PC-3 (cell line): ENCODE measurements at regions of chr14 and their contacts with region 1.

Region 1: GRCh38 chr14:55957950-55958349 is 160.3 kb upstream of the PELI2 start:
- DNase-seq: no peak
- ATAC-seq: no peak
- H3K4me3 ChIP-seq: no peak overlapping the region
- H3K27ac ChIP-seq: no peak overlapping the region
- H3K4me1 ChIP-seq: no peaks in the 10 kb centered on the region
- H3K27me3 ChIP-seq: peaks cover 87% of the 10 kb centered on the region
- CTCF ChIP-seq: no peak

Region 2: DNA sequence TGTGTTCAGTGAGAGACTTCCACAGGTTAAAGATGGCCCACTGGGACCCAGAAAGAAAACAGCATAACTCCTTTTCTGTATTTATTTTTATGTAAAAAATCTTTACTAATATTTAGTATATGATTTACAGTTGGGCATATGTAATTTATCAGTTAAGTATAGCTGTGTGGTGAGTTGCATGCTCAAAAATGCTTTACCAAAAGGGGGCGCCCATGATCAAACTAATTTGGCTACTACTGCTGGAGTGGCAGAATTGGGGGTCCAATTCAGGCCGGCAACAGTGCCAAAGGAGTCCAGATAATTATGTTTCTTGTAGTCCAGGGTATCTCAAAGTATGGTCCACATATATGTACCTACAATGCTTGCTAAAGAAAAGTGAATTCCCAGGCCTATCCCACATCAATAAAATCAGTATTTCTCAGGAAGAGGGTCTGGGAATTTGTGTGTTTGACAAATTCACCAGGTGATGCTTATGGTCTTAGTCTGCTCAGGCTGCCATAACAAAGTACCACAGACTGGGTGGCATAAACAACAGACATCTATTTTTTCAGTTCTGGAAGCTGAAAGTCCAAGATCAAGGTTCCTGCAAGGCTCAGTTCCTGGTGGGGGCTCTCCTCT is 226.0 kb before region 1 on chr14:
- CTCF ChIA-PET with region 1: no interaction called
- POLR2A ChIA-PET with region 1: no interaction called
- intact Hi-C with region 1: loop called (anchors 5 kb)
- DNase-seq: peak; percentile 80
- ATAC-seq: peak; percentile 57
- H3K4me3 ChIP-seq: no peak overlapping the region
- H3K27ac ChIP-seq: no peak overlapping the region
- H3K4me1 ChIP-seq: peaks cover 11% of the 10 kb centered on the region
- H3K27me3 ChIP-seq: no peaks in the 10 kb centered on the region
- CTCF ChIP-seq: peak; percentile 98

Region 3: GRCh38 chr14:55942076-55942654 is 15.8 kb before region 1 on chr14:
- CTCF ChIA-PET with region 1: interaction called, 13 read pairs
- POLR2A ChIA-PET with region 1: no interaction called
- intact Hi-C with region 1: no loop called
- DNase-seq: no peak
- ATAC-seq: no peak
- H3K4me3 ChIP-seq: no peak overlapping the region
- H3K27ac ChIP-seq: no peak overlapping the region
- H3K4me1 ChIP-seq: peaks cover 8% of the 10 kb centered on the region; the same call in 1 of the 2 replicates
- H3K27me3 ChIP-seq: 0 out of 2 replicates have a peak, but pooled peaks cover 9% of the 10 kb centered on the region
- CTCF ChIP-seq: no peak